CD8-positive, alpha-beta memory T cell (primary cell): ENCODE measurements at regions of chr2 and their contacts with region 1.

Region 1: DNA sequence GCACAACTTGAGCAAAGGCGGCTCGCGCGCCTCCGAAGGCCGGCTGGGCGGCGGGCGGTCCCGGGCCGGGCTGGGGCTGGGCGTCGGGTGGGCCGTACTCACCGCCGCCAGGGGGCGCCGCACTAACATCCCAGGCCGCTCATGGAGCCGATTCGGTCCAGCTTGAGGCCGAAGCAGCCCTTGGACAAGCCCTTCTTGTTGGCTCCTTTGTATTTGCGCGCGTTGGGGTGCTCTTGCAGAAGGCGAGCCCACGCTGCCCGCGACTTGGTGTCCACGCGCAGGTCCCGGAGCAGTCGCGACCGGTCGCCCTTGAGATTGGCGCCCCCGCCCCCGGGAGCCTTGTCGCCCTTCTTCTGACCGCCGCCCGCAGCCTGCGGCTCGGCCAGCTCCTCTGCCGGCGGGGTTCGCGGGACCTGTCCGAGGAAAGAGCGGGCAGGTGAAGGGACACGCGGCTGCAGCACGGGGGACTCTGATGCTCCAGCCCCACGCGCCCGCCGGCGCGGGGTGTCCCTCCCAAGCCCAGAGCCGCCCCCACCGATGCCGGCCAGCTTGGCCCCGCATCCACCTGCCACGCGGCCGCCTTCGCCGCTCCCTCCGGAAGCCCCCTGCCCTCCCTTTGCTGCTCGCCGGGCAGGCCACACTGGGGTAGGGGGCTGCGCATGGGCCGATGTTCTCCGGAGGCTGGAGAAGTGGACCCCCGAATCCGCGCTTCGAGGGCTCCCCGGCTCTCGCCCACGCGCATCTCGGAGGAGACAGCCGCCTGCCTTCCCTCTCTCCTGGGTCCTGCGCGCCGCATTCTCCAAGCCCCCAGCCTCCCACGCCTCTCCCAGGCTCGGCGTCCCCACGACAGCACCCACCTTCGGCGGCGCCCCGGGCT is 655 bp downstream of the NPPC start:
- DNase-seq: peak; percentile 43 to 69 (median 58)
- H3K4me3 ChIP-seq: peak overlapping the region; percentile 41
- H3K4me3 Mint-ChIP-seq: peak overlapping the region in 4 of 7 donors; percentile 26 to 59 (median 34)
- H3K27ac ChIP-seq: no peak overlapping the region
- H3K27ac Mint-ChIP-seq: no peak overlapping the region
- H3K4me1 ChIP-seq: peaks cover 11% of the 10 kb centered on the region
- H3K4me1 Mint-ChIP-seq: peaks cover 0 to 17% (median 11%) of the 10 kb centered on the region in 3 donors
- H3K27me3 ChIP-seq: peaks cover 37% of the 10 kb centered on the region
- H3K27me3 Mint-ChIP-seq: peaks cover 28 to 59% of the 10 kb centered on the region in 2 donors

Region 2: DNA sequence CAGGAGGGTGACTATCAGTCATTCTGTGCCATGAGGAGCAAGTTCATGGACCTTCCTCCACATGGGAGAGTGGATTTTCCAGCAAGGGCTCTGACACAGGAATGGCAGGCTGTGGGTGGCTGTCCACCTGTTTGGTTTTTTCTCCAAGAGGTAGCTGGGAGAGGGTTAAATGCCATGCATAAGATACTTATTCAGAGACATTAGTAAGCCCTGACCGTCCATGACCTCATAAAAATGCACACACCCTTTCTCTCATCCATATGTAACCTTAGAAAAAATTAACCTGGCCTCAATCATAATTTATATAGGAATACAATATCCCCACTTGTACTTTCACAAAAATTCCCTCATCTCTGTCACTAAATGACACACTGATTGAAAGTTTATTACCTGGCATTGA is 50.6 kb before region 1 on chr2:
- CTCF ChIA-PET with region 1: no interaction called
- POLR2A ChIA-PET with region 1: no interaction called
- DNase-seq: no peak
- H3K4me3 ChIP-seq: no peak overlapping the region
- H3K4me3 Mint-ChIP-seq: no peak overlapping the region
- H3K27ac ChIP-seq: no peak overlapping the region
- H3K27ac Mint-ChIP-seq: no peak overlapping the region
- H3K4me1 ChIP-seq: no peaks in the 10 kb centered on the region
- H3K4me1 Mint-ChIP-seq: no peaks in the 10 kb centered on the region
- H3K27me3 ChIP-seq: no peaks in the 10 kb centered on the region
- H3K27me3 Mint-ChIP-seq: peaks cover 5 to 36% of the 10 kb centered on the region in 2 donors

Region 3: GRCh38 chr2:232142049-232142448 is 216.5 kb after region 1 on chr2:
- CTCF ChIA-PET with region 1: interaction called, 11 read pairs
- POLR2A ChIA-PET with region 1: no interaction called
- DNase-seq: peak in 1 of 5 donors; percentile 23
- H3K4me3 ChIP-seq: no peak overlapping the region
- H3K4me3 Mint-ChIP-seq: peak overlapping the region in 1 of 7 donors; percentile 33
- H3K27ac ChIP-seq: no peak overlapping the region
- H3K27ac Mint-ChIP-seq: no peak overlapping the region
- H3K4me1 ChIP-seq: peaks cover 22% of the 10 kb centered on the region
- H3K4me1 Mint-ChIP-seq: peaks cover 12 to 19% (median 15%) of the 10 kb centered on the region in 3 donors
- H3K27me3 ChIP-seq: no peaks in the 10 kb centered on the region
- H3K27me3 Mint-ChIP-seq: peaks cover 0 to 2% of the 10 kb centered on the region in 2 donors